Activated CD4-positive, alpha-beta T cell treated with anti-CD3 and anti-CD28 coated beads, Interleukin-2, amount 10 ng/mL, durations not matched to agents 24 days and 14 days (primary cell): ENCODE measurements at regions of chr3 and their contacts with region 1.

Region 1: DNA sequence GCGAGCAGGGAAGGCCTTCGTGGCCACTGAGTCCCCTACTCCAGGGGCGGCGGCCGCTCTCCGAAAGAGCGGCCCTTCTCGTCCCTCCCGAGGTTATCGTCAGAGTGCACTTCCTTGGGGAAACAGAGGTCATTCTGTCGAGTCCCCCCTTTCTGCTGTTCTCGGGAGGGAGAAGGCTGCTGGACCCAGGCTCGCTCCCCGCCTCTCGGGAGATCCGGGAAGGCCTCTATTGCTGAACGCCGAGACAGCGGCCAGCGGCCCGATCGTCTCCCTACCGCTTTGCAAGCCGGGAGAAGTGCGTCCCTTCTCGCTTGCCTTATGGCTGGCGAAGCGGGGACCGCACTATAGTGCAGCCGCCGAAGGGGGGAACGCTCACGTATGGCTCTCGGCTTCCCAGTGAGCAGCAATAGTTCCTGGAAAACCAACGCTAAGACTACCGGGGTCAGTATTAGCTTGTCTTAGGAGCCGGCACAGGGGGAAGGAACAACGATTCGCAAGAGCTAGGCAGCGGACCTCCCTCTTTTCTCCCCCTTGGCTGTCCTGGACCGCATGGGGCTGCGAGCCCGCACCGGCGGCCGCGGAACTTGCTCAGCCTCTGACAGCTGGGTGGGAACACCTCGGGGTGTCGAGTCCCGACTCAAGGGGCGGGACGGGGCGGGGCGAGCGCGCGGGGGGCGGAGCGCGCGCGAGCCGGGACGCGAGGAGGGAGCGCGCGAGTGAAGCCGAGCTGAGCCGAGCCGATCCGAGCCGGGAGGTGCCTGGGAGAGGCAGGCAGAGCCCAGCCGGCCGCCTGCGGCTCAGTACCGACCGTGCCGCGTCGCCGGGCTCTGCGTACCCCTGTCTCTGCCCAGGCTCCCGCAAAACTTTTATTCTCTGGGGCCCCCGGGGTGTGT is 930 bp upstream of the PPM1L start:
- DNase-seq: peak; percentile 96
- H3K4me3 Mint-ChIP-seq: peak overlapping the region; percentile 94
- H3K27ac Mint-ChIP-seq: peak overlapping the region; percentile 95
- H3K4me1 Mint-ChIP-seq: peaks cover 26% of the 10 kb centered on the region
- H3K27me3 Mint-ChIP-seq: peaks cover 40% of the 10 kb centered on the region

Region 2: GRCh38 chr3:160449636-160450598 is 305.2 kb before region 1 on chr3 and contains the start of gene TRIM59:
- intact Hi-C with region 1: loop called (anchors 1 kb)
- DNase-seq: peak; percentile 99
- H3K4me3 Mint-ChIP-seq: peak within 1 kb of the TSS; percentile 99
- H3K27ac Mint-ChIP-seq: peak within 1 kb of the TSS; percentile 100
- H3K4me1 Mint-ChIP-seq: peaks cover 29% of the 10 kb centered on the region
- H3K27me3 Mint-ChIP-seq: no peaks in the 10 kb centered on the region
- total RNA-seq, gene TRIM59: 31.8 and 35.0 TPM in 2 replicates

Region 3: DNA sequence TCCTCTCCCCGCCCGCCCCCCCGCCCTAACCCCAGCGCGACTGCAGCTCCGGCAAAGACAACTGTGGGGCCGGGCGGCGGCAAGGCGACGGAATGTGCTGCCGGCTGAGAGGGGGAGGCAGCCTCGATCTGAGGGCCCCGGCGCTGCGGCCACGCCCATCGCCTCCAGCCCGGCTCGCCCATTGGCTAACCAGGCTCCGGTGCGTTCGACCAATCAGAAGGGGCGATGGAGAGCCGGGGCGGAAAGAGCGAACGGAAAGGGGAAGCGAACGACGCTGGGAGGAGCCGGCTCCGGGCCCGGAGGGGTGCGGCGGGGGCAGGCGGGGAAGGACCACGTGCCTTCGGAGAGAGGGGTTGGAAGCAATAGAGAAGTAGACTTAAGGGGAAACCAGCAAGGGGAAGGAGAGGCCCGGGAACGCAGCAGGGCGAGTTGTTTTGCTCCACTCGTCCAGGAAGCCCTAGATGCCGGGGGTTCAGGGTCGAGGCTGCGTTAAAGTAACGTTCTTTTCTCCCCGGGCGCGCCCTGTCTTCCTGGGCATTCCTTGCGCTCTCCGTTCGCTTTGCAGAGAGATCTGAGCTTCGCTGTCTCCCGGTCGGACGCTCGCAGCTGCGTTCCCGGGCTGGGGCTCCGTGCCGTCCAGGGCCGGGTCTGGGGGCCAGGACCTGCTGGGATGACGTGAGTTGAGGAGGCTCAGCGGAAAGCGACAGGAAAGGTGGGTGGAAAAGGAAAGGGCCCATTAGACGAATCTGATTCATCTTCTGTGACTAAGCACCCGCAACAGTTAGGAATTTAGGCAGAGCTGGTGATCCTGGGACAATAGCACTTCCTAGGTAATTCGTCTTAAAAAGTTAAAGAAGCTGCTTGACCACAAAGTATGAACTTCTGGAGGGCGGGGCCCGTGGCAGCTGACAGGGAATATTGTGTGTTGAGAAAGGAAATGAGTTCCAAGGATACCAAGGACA is 189.4 kb before region 1 on chr3 and contains the start of gene KPNA4:
- intact Hi-C with region 1: loop called (anchors 1 kb)
- DNase-seq: peak; percentile 99
- H3K4me3 Mint-ChIP-seq: peak within 1 kb of the TSS; percentile 100
- H3K27ac Mint-ChIP-seq: peak within 1 kb of the TSS; percentile 100
- H3K4me1 Mint-ChIP-seq: peaks cover 52% of the 10 kb centered on the region
- H3K27me3 Mint-ChIP-seq: no peaks in the 10 kb centered on the region
- total RNA-seq, gene KPNA4: 72.5 and 75.9 TPM in 2 replicates

Region 4: DNA sequence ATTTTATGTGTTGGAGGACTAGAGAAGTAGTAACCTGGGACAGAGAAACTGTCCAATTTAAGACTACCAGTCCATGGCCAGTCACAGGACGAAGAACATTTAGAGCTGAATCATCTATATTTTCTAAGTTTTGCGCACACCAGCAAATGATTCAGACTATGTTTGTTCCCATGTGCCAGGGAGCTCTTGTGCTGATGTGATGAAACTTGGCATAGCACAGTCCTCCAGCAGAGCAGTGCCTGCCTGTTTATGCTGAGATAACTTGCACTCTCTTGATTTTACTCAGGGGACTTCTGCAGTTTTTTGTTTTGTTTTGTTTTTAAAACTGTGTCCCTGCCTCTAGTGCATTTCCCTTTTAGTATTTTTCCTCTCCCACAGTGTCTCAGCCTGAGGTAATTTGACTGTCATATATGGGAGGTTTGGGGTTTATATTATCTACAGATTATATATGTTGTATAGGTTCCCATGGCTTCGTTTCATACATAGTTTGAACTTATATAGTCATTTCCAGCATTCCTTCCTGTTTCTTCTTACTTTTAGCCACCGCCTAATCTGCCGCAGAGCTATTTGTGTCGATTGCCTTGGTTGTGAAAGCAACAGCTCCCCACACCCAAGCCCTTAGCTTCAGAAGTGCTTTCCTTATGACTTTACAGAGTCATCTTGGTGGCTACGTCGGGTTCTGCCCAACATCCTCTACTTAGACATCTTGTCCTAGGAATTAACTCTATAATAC is 46.5 kb after region 1 on chr3:
- intact Hi-C with region 1: loop called (anchors 1 kb)
- DNase-seq: peak; percentile 90
- H3K4me3 Mint-ChIP-seq: peak overlapping the region; percentile 71
- H3K27ac Mint-ChIP-seq: peak overlapping the region; percentile 84
- H3K4me1 Mint-ChIP-seq: peaks cover 19% of the 10 kb centered on the region
- H3K27me3 Mint-ChIP-seq: peaks cover 4% of the 10 kb centered on the region

Region 5: DNA sequence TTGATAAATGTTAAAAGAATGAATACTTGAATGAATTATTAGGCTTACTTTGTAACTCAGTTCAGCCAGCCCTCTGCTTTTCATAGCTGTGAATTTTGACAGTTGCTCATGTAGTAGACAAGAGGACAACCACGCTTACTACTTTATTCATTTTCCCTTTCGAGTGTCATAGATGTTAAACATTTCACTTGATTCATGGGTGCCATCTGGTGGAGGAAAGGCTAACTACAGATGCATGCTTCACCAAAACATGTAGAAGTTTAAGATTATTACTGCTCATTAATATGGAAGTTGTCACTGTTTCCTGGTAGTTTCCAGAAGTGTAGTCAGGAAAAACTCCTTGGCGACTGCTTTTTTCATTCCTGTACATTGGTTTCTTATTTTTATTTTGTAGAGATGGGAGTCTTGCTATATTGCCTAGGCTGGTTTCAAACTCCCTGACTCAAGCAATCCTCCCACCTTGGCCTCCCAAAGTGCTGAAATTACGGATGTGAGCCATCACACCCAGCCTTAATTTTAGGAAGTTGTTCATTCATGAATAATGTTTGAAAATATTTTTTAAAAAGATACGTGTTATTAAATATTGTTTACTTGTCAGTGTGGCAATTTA is 186.9 kb after region 1 on chr3:
- intact Hi-C with region 1: loop called (anchors 1 kb)
- DNase-seq: peak; percentile 91
- H3K4me3 Mint-ChIP-seq: no peak overlapping the region
- H3K27ac Mint-ChIP-seq: no peak overlapping the region
- H3K4me1 Mint-ChIP-seq: peaks cover 2% of the 10 kb centered on the region
- H3K27me3 Mint-ChIP-seq: peaks cover 9% of the 10 kb centered on the region

Region 6: DNA sequence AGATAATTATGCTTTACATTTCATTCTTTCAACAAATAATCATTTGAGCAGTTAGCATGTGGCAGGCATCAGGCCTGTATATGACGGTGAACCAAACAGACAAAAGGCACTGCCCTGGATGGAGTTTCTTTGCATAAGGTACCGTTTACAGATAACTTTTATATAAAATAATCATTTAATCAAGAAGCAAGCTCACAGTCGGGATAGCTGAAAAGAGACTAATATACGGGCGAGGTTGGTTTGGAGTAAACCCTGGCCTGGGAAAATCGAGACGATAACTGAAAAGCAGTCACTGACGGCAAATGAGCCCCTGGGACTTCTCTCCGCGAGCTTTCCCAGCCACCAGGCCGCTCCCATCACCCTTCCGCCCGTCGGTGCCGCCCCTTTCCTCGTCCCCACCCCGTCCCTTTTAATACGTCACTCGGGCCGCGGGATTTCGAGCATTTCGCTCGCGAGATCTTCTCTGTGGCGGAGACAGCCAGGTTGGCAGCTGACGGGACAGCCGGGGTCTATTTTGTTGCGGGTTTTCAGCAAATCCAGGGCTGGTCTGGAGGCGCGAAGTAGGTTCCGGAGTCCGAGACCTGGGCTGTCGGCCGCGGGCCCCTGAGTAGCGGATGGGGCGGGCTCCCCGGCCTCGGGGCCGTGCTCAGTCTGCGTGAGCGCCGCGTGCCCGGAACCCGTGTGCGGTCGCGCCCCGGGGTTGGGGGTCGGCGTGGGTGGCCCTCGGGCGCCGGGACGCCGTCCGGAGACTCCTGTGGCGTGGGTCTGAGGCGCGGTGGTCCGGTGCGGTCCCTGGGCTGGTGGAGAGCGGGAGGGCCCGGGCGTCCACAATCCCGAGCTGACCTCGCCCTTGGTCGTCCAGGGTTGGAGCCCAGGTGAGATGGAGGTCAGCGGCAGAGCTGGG is 466.0 kb after region 1 on chr3 and contains the start of gene NMD3:
- intact Hi-C with region 1: loop called (anchors 2 kb)
- DNase-seq: peak; percentile 98
- H3K4me3 Mint-ChIP-seq: peak within 1 kb of the TSS; percentile 93
- H3K27ac Mint-ChIP-seq: peak within 1 kb of the TSS; percentile 91
- H3K4me1 Mint-ChIP-seq: peaks cover 23% of the 10 kb centered on the region
- H3K27me3 Mint-ChIP-seq: peaks cover 9% of the 10 kb centered on the region
- total RNA-seq, gene NMD3: 78.2 and 81.8 TPM in 2 replicates